Thyroid gland (tissue), 4 donors: ENCODE measurements at regions of chr12 and their contacts with region 1.

Region 1: GRCh38 chr12:46364777-46365580 is 7.6 kb downstream of the SLC38A2 start:
- DNase-seq: peak; percentile 30 to 36
- H3K4me3 ChIP-seq: no peak overlapping the region
- H3K27ac ChIP-seq: peak overlapping the region in 1 of 3 donors; percentile 59
- H3K4me1 ChIP-seq: peaks cover 28 to 31% of the 10 kb centered on the region in 2 donors
- H3K27me3 ChIP-seq: no peaks in the 10 kb centered on the region
- CTCF ChIP-seq: no peak
- POLR2A ChIP-seq: no peak

Region 2: GRCh38 chr12:46300910-46301309 is 64.1 kb before region 1 on chr12:
- intact Hi-C with region 1: no loop called
- DNase-seq: peak in 1 of 2 donors; percentile 7
- H3K4me3 ChIP-seq: no peak overlapping the region
- H3K27ac ChIP-seq: no peak overlapping the region
- H3K4me1 ChIP-seq: no peaks in the 10 kb centered on the region
- H3K27me3 ChIP-seq: no peaks in the 10 kb centered on the region
- CTCF ChIP-seq: no peak
- POLR2A ChIP-seq: no peak

Region 3: DNA sequence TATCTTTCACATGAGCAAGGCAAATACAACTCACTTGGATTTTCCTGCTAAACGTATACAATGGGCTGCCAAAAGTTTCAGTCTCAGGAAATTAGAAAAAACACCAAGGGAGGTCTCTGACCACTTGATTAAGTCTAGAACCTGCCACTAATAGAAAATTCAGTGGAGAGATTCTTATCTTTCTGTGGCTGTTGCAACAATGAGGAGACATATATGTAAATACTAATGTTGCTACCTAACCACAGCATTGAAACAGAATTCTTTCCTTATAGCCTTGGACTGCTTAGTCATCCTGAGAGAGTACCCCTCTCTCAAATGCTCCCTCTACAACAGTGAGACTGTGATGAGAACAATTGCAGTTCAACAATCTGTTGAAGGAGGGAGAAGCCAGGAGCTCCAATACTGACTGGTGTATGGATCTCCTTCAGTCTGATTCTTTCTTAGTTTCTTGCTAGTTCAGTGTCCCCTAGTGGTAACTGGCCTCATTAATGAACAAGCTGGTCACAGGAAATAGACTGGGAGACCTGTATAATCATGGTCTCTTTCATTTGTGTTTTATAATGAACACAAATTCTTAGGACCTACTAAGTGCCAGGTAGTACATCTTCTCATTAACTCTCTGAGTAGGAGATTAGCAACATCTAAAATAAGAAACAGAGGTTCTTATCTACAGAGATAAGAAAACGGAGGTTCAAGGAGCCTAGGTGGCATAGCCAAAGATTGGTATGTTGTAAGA is 296.3 kb after region 1 on chr12:
- intact Hi-C with region 1: loop called (anchors 10 kb)
- DNase-seq: peak in 1 of 2 donors; percentile 5
- H3K4me3 ChIP-seq: no peak overlapping the region
- H3K27ac ChIP-seq: peak overlapping the region; percentile 3 to 54 (median 27)
- H3K4me1 ChIP-seq: peaks cover 0 to 5% of the 10 kb centered on the region in 2 donors
- H3K27me3 ChIP-seq: no peaks in the 10 kb centered on the region
- CTCF ChIP-seq: peak; percentile 42 to 88 (median 71)
- POLR2A ChIP-seq: no peak